Spleen (tissue), 13 donors: ENCODE measurements at regions of chr3 and their contacts with region 1.

Region 1: DNA sequence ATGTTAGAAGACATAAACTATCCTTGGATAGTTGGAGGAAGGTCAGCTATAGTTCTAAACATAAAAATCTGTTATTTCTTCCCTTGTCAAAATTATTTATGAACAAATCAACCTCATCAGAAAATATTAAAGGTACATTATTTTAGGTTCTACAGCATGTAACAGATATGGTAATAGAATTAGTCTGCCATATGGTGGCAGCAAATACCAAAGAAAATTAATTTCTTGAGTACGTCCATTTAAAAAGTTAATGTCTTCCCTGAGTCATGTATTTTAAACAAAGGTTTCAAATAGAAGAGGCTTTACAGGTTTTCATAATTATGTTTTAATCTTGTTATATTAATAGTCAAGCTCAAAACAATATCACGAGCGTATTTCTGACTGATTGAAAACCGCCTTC is 17.9 kb upstream of the ANKRD28 start:
- DNase-seq: no peak
- H3K4me3 ChIP-seq: no peak overlapping the region
- H3K27ac ChIP-seq: peak overlapping the region in 2 of 8 donors; percentile 12 to 55
- H3K4me1 ChIP-seq: peaks cover 0 to 50% (median 23%) of the 10 kb centered on the region in 6 donors
- H3K27me3 ChIP-seq: no peaks in the 10 kb centered on the region
- CTCF ChIP-seq: peak in 8 of 11 experiments; percentile 10 to 65 (median 56)
- POLR2A ChIP-seq: no peak

Region 2: DNA sequence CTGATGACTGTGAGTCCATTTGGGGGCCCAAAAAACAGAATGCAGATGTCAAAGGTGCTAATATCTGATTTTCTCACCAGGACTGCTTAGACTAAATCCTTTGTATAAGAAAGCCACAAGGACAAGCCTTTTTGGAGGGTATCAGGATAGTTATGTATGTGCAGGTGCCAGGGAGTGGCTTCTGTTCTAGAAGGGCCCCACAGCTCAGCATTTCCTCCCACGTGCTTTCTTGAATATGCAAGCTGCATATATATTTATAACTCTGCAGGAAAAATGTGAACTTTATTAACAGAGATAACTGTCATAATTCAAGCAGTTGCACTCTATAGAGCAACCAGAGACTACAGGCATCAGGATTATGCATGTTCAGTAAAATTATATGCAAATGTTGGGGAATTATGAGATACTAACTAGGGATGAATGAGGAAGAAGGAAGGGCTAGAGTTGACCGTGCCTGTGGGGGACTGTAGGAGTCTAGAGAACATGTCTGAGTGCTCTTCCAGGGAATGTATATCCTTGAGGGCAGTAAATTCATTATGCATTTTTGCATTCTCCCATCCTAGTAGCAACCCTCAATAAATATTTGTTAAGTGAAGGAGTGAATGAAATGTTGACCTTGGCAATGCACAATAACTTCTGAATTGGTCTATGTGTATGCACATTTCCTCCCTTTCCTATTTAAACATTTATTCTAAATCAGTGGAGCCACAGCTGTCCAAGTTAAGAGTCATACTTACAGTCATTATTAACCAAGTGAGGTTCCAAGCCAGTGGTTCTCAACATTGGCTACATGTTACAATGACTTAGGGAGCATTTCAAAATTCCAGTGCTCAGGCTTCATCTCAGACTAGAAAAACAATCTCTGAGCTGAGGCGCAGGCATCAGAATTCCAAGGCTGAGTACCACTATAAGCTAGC is 76.9 kb after region 1 on chr3:
- intact Hi-C with region 1: no loop called
- DNase-seq: no peak
- H3K4me3 ChIP-seq: no peak overlapping the region
- H3K27ac ChIP-seq: no peak overlapping the region
- H3K4me1 ChIP-seq: no peaks in the 10 kb centered on the region
- H3K27me3 ChIP-seq: no peaks in the 10 kb centered on the region
- CTCF ChIP-seq: no peak
- POLR2A ChIP-seq: no peak

Region 3: GRCh38 chr3:16026753-16027152 is 211.1 kb after region 1 on chr3:
- intact Hi-C with region 1: no loop called
- DNase-seq: no peak
- H3K4me3 ChIP-seq: no peak overlapping the region
- H3K27ac ChIP-seq: no peak overlapping the region
- H3K4me1 ChIP-seq: no peaks in the 10 kb centered on the region
- H3K27me3 ChIP-seq: no peaks in the 10 kb centered on the region
- CTCF ChIP-seq: no peak
- POLR2A ChIP-seq: no peak

Region 4: DNA sequence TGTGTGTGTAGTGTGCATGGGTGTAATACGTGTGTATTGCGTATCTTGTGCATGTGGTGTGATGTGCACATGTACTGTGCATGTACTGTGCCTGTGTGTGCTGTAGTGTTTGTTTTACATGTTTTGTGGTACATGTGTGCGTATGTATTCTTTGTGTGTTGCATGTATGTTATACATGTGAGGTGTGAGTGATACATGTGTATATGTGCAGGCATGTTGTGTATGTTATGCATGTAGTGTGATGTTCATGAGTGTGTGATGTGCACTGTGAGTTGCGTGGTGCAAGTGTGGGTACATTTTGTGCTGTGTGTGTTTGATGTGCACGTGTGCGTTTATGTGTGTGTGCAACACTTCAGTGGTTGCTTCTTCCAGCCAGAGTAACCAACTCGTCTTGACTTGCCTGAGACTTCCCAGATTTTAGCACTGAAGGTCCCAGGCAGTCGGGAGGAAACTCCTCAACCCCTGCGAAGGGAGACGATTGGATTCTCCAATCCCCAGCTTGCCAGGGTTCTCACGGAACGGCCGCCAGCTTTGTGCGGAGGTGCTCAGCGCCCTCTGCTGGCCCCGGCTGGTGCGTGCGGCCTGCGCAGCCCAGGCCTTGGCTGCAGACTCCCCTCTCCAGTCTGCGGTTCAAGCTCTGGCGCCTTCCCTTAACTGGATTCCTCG is 362.4 kb after region 1 on chr3:
- intact Hi-C with region 1: loop called (anchors 5 kb)
- DNase-seq: peak; percentile 90
- H3K4me3 ChIP-seq: peak overlapping the region; percentile 18 to 72 (median 40)
- H3K27ac ChIP-seq: peak overlapping the region in 1 of 8 donors; percentile 2
- H3K4me1 ChIP-seq: peaks cover 0 to 51% (median 16%) of the 10 kb centered on the region in 6 donors
- H3K27me3 ChIP-seq: peaks cover 0 to 24% (median 0%) of the 10 kb centered on the region in 7 donors
- CTCF ChIP-seq: peak; percentile 63 to 97 (median 91)
- POLR2A ChIP-seq: no peak

Region 5: GRCh38 chr3:16247276-16248061 is 431.8 kb after region 1 on chr3:
- intact Hi-C with region 1: loop called (anchors 5 kb)
- DNase-seq: peak; percentile 89
- H3K4me3 ChIP-seq: peak overlapping the region in 1 of 8 donors; percentile 27
- H3K27ac ChIP-seq: no peak overlapping the region
- H3K4me1 ChIP-seq: peaks cover 7 to 20% (median 11%) of the 10 kb centered on the region in 6 donors
- H3K27me3 ChIP-seq: no peaks in the 10 kb centered on the region
- CTCF ChIP-seq: peak; percentile 63 to 92 (median 90)
- POLR2A ChIP-seq: no peak